ENCODE measurements at regions of chr9 and their contacts with region 1.

Region 1: GRCh38 chr9:5832543-5833529 is at the start of gene ERMP1:
- DNase-seq: peak; percentile 93
- H3K4me3 Mint-ChIP-seq: peak within 1 kb of the TSS; percentile 93
- H3K27ac Mint-ChIP-seq: peak within 1 kb of the TSS; percentile 89
- H3K4me1 Mint-ChIP-seq: peaks cover 43% of the 10 kb centered on the region
- H3K27me3 Mint-ChIP-seq: no peaks in the 10 kb centered on the region
- total RNA-seq, gene ERMP1: 23.5 to 27.1 TPM

Region 2: DNA sequence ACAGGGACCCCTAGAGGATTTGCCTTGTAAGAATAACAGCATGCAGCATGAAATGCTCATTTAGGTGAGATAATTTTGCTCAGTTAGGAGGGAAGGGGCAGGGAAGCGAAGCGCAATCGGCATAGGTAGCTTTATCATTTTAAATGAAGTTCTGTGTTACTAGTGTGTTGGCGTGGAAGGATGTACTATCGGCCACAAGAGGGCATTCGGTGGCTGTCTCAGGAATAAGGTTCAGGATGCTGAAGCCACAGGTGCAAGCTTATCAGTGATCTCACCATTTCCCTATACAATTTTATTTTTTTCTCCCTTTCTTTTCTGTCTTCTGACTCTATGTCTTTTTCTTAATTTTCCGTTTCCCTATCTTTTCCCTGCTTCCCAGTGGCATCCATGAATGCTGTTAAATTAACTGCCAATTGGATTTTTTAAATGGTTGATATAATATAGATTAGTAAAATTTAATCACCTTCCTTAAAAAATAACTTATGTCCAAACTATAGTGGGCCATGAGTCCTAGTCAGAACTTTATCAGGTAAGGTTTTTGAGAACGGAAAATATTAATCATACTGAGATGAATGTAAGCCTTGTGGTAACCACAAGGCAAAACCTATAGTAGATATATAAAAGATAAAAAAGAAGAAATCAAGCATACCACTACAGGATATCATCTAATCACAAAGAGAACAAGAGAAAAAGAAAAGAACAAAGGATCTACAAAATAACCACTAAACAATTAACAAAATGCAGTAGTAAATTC is 646.2 kb before region 1 on chr9:
- CTCF ChIA-PET with region 1: no interaction called
- intact Hi-C with region 1: loop called (anchors 5 kb)
- DNase-seq: peak; percentile 79
- H3K4me3 Mint-ChIP-seq: no peak overlapping the region
- H3K27ac Mint-ChIP-seq: no peak overlapping the region
- H3K4me1 Mint-ChIP-seq: peaks cover 13% of the 10 kb centered on the region
- H3K27me3 Mint-ChIP-seq: no peaks in the 10 kb centered on the region

Region 3: DNA sequence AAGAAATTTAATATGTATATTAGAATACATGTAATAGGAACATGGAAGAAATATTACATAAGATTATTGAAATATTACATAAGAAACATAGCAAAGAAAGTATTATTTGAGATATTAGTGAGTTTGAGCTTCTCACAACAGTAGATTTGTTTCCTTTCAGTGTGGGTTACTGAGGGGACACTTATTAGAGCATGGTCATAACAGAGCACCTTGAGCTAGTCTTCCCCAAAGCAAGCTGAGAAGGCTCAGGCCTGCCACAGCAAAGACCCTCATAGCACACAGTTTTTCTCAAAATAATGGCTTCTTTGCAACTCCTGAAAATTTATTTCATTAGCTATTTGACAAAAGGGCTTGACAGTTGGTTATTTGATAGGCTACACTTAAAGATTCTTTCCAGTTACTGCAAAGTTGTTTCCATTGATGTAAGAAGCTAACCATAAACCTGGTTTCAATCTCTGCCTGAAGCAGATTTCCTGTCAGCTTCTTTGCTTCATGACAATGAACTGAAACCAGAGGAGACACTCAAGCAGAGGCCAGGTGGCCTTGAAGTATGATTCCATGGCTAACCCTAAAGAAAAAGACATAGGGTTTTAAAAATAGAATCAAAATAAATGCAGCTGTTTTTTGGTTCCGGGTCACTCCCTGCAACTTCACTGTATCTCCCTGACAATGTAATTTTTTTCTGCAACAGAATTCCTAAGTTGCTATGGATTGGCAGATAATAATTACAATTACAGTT is 68.5 kb before region 1 on chr9:
- CTCF ChIA-PET with region 1: interaction called, 7 read pairs
- intact Hi-C with region 1: loop called (anchors 1 kb)
- DNase-seq: peak; percentile 55
- H3K4me3 Mint-ChIP-seq: no peak overlapping the region
- H3K27ac Mint-ChIP-seq: peak overlapping the region; percentile 83
- H3K4me1 Mint-ChIP-seq: peaks cover 72% of the 10 kb centered on the region
- H3K27me3 Mint-ChIP-seq: no peaks in the 10 kb centered on the region

Region 4: GRCh38 chr9:5799314-5799713 is 33.5 kb before region 1 on chr9:
- CTCF ChIA-PET with region 1: interaction called, 3 read pairs
- intact Hi-C with region 1: loop called (anchors 1 kb)
- DNase-seq: peak; percentile 42
- H3K4me3 Mint-ChIP-seq: no peak overlapping the region
- H3K27ac Mint-ChIP-seq: no peak overlapping the region
- H3K4me1 Mint-ChIP-seq: peaks cover 26% of the 10 kb centered on the region
- H3K27me3 Mint-ChIP-seq: no peaks in the 10 kb centered on the region

Region 5: GRCh38 chr9:5851445-5851844 is 18.6 kb after region 1 on chr9:
- CTCF ChIA-PET with region 1: interaction called, 14 read pairs
- intact Hi-C with region 1: loop called (anchors 1 kb)
- DNase-seq: peak; percentile 73
- H3K4me3 Mint-ChIP-seq: no peak overlapping the region
- H3K27ac Mint-ChIP-seq: peak overlapping the region; percentile 26
- H3K4me1 Mint-ChIP-seq: peaks cover 41% of the 10 kb centered on the region
- H3K27me3 Mint-ChIP-seq: no peaks in the 10 kb centered on the region

Region 6: GRCh38 chr9:6681147-6681956 is 848.5 kb after region 1 on chr9:
- CTCF ChIA-PET with region 1: no interaction called
- intact Hi-C with region 1: loop called (anchors 1 kb)
- DNase-seq: peak; percentile 94
- H3K4me3 Mint-ChIP-seq: peak overlapping the region; percentile 95
- H3K27ac Mint-ChIP-seq: peak overlapping the region; percentile 99
- H3K4me1 Mint-ChIP-seq: peaks cover 18% of the 10 kb centered on the region
- H3K27me3 Mint-ChIP-seq: no peaks in the 10 kb centered on the region

Measured in activated naive CD4-positive, alpha-beta T cell treated with anti-CD3 and anti-CD28 coated beads for 36 hours (primary cell).